Ascending aorta (tissue), 2 donors: ENCODE measurements at regions of chr11 and their contacts with region 1.

Region 1: GRCh38 chr11:72781313-72782050 is 12.4 kb downstream of the STARD10 start:
- DNase-seq: no peak
- H3K4me3 ChIP-seq: peak overlapping the region; percentile 66 to 94
- H3K27ac ChIP-seq: no peak overlapping the region
- H3K4me1 ChIP-seq: peaks cover 8 to 27% of the 10 kb centered on the region in 2 donors
- H3K27me3 ChIP-seq: no peaks in the 10 kb centered on the region
- CTCF ChIP-seq: no peak

Region 2: DNA sequence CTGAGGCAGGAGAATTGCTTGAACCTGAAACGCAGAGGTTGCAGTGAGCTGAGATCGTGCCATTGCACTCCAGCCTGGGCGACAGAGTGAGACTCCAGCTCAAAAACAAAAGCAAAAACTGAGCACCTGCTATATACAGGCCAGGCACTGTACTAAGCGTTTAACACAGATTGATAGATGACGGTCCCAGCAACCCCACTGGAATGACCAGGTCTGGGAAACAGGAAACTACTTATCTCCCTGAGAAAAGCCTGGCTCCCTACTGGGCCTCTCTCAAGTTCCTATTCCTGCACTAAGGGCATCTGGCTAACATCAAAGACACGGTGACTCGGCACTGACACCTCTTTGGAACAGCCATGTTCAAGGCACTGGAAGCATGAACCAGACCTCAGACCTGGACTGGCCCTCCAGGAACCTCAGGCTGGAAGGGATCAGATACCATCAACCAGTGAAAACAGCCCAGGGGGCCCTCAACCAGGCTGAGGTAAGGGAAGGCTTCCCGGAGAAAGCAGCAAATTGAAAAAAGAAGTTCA is 45.9 kb before region 1 on chr11:
- intact Hi-C with region 1: loop called (anchors 2 kb)
- DNase-seq: no peak
- H3K4me3 ChIP-seq: no peak overlapping the region
- H3K27ac ChIP-seq: peak overlapping the region in 1 of 2 donors; percentile 54
- H3K4me1 ChIP-seq: peaks cover 0 to 6% of the 10 kb centered on the region in 2 donors
- H3K27me3 ChIP-seq: no peaks in the 10 kb centered on the region
- CTCF ChIP-seq: no peak

Region 3: DNA sequence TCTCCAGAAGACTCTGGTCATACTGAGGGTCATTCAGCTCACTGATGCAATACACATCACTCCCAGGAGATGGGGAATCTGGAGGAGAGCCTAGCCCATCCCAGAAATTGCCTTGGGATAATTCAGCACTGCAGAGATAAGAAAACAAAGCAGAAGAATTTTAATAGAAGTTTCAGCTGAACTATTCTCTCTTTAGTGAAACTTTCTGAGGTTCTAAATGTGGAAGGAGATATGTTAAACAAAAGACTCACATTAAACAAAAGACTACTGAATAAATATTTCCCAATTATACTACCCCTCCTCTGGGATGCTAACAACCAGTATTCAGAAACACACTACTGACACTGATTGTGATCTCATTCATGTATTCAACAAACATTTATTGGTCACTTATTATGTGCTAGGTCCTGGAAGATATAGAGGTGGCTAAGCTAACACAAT is 1341.5 kb after region 1 on chr11:
- intact Hi-C with region 1: no loop called
- DNase-seq: no peak
- H3K4me3 ChIP-seq: no peak overlapping the region
- H3K27ac ChIP-seq: no peak overlapping the region
- H3K4me1 ChIP-seq: no peaks in the 10 kb centered on the region
- H3K27me3 ChIP-seq: no peaks in the 10 kb centered on the region
- CTCF ChIP-seq: no peak